H1 (cell line): ENCODE measurements at regions of chr5 and their contacts with region 1.

Region 1: GRCh38 chr5:43631182-43631910 is 28.4 kb downstream of the NNT start:
- DNase-seq: peak in 1 of 2 experiments; percentile 54
- H3K4me3 ChIP-seq: no peak overlapping the region
- H3K27ac ChIP-seq: no peak overlapping the region
- H3K4me1 ChIP-seq: no peaks in the 10 kb centered on the region; a peak in 1 of 7 replicates
- H3K27me3 ChIP-seq: peaks cover 0 to 1% (median 0%) of the 10 kb centered on the region in 4 experiments; a peak in 1 of 7 replicates
- CTCF ChIP-seq: peak in 2 of 3 experiments; percentile 55 to 70; a peak in 2 of 4 replicates
- EP300 ChIP-seq: no peak
- POLR2A ChIP-seq: no peak
- RAD21 ChIP-seq: peak; percentile 69

Region 2: DNA sequence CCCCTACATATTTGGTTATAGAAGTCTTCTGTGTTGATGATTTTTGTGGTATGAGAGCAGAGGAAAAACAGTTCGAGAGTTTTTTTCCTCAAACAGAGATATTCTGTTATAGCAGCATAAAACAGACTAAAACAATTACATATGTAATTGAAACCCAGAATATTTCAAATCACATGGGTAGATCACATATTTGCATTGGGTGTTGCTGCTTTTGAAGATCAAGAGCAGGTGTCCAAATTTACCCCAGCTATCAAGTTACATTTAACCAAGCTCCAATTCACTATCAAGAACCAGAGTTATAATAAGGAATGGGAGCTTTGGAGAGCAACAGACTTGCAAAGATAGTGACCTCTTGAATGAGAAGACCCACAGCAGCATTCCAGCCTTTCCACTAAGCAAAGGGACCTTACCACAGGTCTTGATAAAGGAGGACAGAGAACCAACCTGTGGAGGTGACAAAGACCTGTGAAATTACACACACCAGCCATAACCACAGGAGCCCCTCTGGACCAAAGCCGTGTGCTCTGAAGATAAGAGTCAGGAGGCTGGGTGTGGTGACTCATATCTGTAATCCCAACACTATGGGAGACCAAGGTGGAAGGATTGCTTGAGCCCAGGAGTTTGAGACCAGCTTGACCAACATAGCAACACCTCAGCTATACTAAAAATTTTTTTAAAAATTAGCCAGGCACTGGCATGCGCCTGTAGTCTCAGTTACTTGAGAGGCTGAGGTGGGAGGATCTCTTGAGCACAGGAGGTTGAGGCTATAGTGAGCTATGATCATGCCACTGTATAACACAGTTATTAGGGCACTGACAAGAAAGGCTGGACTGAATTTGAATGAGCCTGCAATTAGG is 215.2 kb before region 1 on chr5:
- CTCF ChIA-PET with region 1: no interaction called
- POLR2A ChIA-PET with region 1: no interaction called
- DNase-seq: no peak
- H3K4me3 ChIP-seq: no peak overlapping the region
- H3K27ac ChIP-seq: no peak overlapping the region
- H3K4me1 ChIP-seq: no peaks in the 10 kb centered on the region
- H3K27me3 ChIP-seq: no peaks in the 10 kb centered on the region
- CTCF ChIP-seq: no peak
- EP300 ChIP-seq: no peak
- POLR2A ChIP-seq: no peak
- RAD21 ChIP-seq: no peak

Region 3: GRCh38 chr5:43514816-43515677 is 116.3 kb before region 1 on chr5 and contains the start of gene C5orf34:
- CTCF ChIA-PET with region 1: no interaction called
- POLR2A ChIA-PET with region 1: no interaction called
- DNase-seq: peak; percentile 81 to 96
- H3K4me3 ChIP-seq: peak within 1 kb of the TSS; percentile 77 to 88 (median 86)
- H3K27ac ChIP-seq: peak within 1 kb of the TSS; percentile 92
- H3K4me1 ChIP-seq: peaks cover 0 to 4% (median 0%) of the 10 kb centered on the region in 4 experiments; a peak in 2 of 7 replicates
- H3K27me3 ChIP-seq: no peaks in the 10 kb centered on the region
- CTCF ChIP-seq: no peak
- EP300 ChIP-seq: no peak
- POLR2A ChIP-seq: peak; percentile 89 to 90
- RAD21 ChIP-seq: no peak
- total RNA-seq, gene C5orf34: 8.6 and 11.3 TPM in 2 replicates

Region 4: GRCh38 chr5:43619380-43619779 is 12.0 kb before region 1 on chr5:
- CTCF ChIA-PET with region 1: interaction called, 31 read pairs
- POLR2A ChIA-PET with region 1: no interaction called
- DNase-seq: no peak
- H3K4me3 ChIP-seq: no peak overlapping the region
- H3K27ac ChIP-seq: no peak overlapping the region
- H3K4me1 ChIP-seq: no peaks in the 10 kb centered on the region
- H3K27me3 ChIP-seq: no peaks in the 10 kb centered on the region
- CTCF ChIP-seq: no peak
- EP300 ChIP-seq: no peak
- POLR2A ChIP-seq: no peak
- RAD21 ChIP-seq: no peak

Region 5: DNA sequence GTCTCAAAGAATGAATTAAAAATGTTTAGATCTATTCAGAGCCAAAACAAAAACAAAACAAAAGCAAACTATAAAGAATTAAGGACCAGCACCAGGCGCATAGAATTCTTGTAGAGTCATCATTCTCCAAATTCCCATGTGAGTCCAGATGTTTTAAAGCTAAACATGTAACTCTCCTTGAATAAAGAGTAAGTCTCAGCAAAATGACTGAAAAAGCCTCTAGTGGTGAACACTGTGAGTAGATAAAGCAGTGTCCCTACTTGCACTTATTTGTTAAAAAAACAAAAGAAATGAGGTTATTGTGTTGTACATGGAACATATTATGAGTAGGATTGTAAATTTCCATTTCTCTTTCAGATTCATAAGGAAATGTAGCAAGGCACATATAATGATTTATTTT is 15.6 kb after region 1 on chr5:
- CTCF ChIA-PET with region 1: interaction called, 38 read pairs
- POLR2A ChIA-PET with region 1: no interaction called
- DNase-seq: no peak
- H3K4me3 ChIP-seq: no peak overlapping the region
- H3K27ac ChIP-seq: no peak overlapping the region
- H3K4me1 ChIP-seq: no peaks in the 10 kb centered on the region
- H3K27me3 ChIP-seq: no peaks in the 10 kb centered on the region
- CTCF ChIP-seq: no peak
- EP300 ChIP-seq: no peak
- POLR2A ChIP-seq: no peak
- RAD21 ChIP-seq: no peak